ENCODE measurements at regions of chr15 and their contacts with region 1.

Region 1: GRCh38 chr15:64731012-64731806 is 44.2 kb downstream of the RBPMS2 start:
- DNase-seq: peak; percentile 64 to 81
- ATAC-seq: peak; percentile 71 to 88
- H3K4me3 ChIP-seq: no peak overlapping the region
- H3K27ac ChIP-seq: no peak overlapping the region
- H3K4me1 ChIP-seq: no peaks in the 10 kb centered on the region
- H3K27me3 ChIP-seq: no peaks in the 10 kb centered on the region
- CTCF ChIP-seq: peak; percentile 90 to 96 (median 93)
- POLR2A ChIP-seq: no peak

Region 2: DNA sequence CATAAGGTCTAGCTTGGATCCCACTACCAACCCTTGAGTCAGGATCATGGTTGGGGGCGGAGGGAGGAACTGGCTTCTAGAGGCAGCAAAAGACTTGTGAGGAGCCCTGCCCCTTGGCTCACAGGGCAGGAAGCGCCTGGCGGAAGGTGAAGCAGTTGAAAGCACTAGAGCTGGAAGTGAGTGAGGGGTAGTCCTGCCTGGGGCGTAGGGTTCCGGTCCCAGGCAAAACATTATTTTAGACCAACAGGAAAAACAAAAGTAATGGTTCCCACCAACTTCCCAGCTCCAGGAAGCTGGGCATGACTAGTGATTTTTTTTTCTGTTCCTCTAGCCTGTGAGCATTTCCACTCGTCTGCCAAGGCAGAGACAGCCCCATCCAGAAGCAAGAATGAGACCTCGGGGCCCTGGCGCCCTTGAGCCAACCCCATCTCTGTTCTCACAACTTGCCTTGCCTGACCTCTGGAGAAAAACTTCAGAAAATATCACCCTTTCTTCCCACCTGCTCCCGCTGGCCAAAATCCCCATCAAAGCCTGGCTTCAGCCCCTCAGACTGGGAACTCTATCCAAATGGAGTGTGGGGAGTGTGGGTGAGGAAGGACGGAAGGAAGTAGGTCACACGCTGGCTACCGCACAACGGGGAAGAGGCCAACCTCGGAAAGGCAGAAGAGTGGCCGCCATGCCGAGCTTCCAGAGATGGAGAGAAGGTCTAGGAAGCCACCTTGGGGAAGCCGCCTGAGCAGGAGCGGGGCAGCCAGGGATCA is 13.3 kb before region 1 on chr15:
- in situ Hi-C with region 1: no loop called
- intact Hi-C with region 1: no loop called
- DNase-seq: no peak
- ATAC-seq: no peak
- H3K4me3 ChIP-seq: peak overlapping the region; percentile 7 to 41 (median 35)
- H3K27ac ChIP-seq: peak overlapping the region; percentile 69 to 82 (median 77)
- H3K4me1 ChIP-seq: peaks cover 12 to 21% of the 10 kb centered on the region in 2 donors
- H3K27me3 ChIP-seq: no peaks in the 10 kb centered on the region
- CTCF ChIP-seq: no peak
- POLR2A ChIP-seq: no peak

Region 3: GRCh38 chr15:64809649-64810496 is 78.7 kb after region 1 on chr15:
- in situ Hi-C with region 1: loop called (anchors 5 kb)
- intact Hi-C with region 1: loop called (anchors 1 kb)
- DNase-seq: peak; percentile 54 to 55
- ATAC-seq: peak; percentile 80 to 88
- H3K4me3 ChIP-seq: no peak overlapping the region
- H3K27ac ChIP-seq: no peak overlapping the region
- H3K4me1 ChIP-seq: no peaks in the 10 kb centered on the region
- H3K27me3 ChIP-seq: no peaks in the 10 kb centered on the region
- CTCF ChIP-seq: peak; percentile 63 to 95 (median 92)
- POLR2A ChIP-seq: no peak

Region 4: GRCh38 chr15:64905119-64905831 is 174.1 kb after region 1 on chr15:
- in situ Hi-C with region 1: loop called (anchors 5 to 25 kb)
- intact Hi-C with region 1: loop called (anchors 1 kb)
- DNase-seq: peak; percentile 35 to 43
- ATAC-seq: peak; percentile 66 to 70
- H3K4me3 ChIP-seq: peak overlapping the region in 2 of 4 donors; percentile 11 to 35
- H3K27ac ChIP-seq: no peak overlapping the region
- H3K4me1 ChIP-seq: no peaks in the 10 kb centered on the region
- H3K27me3 ChIP-seq: peaks cover 6 to 11% (median 9%) of the 10 kb centered on the region in 3 donors
- CTCF ChIP-seq: peak; percentile 69 to 86 (median 76)
- POLR2A ChIP-seq: no peak